Endothelial cell of umbilical vein (primary cell): ENCODE measurements at regions of chr1 and their contacts with region 1.

Region 1: GRCh38 chr1:201361652-201362504 is 15.6 kb downstream of the TNNT2 start:
- DNase-seq: peak; percentile 26
- H3K4me3 ChIP-seq: no peak overlapping the region
- H3K27ac ChIP-seq: no peak overlapping the region
- H3K4me1 ChIP-seq: peaks cover 6% of the 10 kb centered on the region
- H3K27me3 ChIP-seq: peaks cover 0 to 3% of the 10 kb centered on the region in 2 experiments
- CTCF ChIP-seq: peak; percentile 72 to 84
- POLR2A ChIP-seq: no peak

Region 2: GRCh38 chr1:201170533-201171062 is 191.3 kb before region 1 on chr1:
- CTCF ChIA-PET with region 1: no interaction called
- POLR2A ChIA-PET with region 1: no interaction called
- dilution Hi-C with region 1: no loop called
- intact Hi-C with region 1: no loop called
- DNase-seq: peak; percentile 82
- H3K4me3 ChIP-seq: peak overlapping the region; percentile 51 to 57 (median 55)
- H3K27ac ChIP-seq: no peak overlapping the region
- H3K4me1 ChIP-seq: peaks cover 9% of the 10 kb centered on the region
- H3K27me3 ChIP-seq: peaks cover 9 to 11% of the 10 kb centered on the region in 2 experiments
- CTCF ChIP-seq: no peak
- POLR2A ChIP-seq: no peak

Region 3: DNA sequence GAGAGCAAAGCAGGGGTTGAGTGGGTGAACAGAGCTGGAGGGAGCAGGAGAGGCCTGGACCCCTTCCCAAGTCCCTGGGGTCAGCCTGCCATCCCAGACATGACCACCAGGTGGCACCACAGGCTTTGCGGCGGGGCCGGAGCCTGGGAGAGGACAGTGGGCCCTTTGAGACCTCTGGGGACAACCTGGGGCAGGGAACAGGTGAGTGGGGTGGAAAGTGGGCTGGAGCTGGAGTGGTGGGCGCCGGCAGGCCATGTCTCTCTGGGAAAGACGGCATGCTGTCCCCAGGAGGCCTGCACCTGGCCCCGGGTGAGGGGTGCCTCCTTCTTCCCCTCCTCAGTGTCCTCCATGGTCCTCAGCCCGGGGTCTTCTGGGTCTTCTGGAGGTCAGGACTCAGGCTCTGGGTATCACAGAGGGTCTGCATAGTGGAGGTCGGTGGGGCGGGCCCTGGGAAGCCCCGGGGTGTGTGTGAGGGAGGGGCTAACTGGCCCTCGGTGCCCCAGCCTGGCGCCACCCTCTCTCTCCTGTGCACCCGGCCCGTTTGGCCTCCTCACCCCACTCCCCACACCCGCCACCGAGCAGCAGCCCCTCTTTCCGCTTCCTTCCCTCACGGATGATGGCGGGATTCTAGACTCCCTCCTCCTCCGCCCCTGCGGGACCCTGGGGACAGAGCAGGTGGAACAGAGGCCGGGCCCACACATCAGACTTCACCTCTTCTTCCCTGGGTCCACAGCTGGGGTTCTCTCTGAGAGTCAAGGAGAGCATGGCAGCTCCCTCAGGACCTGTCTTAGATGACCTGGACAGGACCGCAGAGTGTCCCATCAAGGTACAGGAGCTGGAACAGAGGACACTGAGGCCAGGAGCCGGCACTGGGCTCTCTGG is 107.0 kb before region 1 on chr1:
- CTCF ChIA-PET with region 1: interaction called, 109 read pairs
- POLR2A ChIA-PET with region 1: no interaction called
- dilution Hi-C with region 1: no loop called
- intact Hi-C with region 1: no loop called
- DNase-seq: peak; percentile 33
- H3K4me3 ChIP-seq: no peak overlapping the region
- H3K27ac ChIP-seq: no peak overlapping the region
- H3K4me1 ChIP-seq: no peaks in the 10 kb centered on the region
- H3K27me3 ChIP-seq: peaks cover 3 to 5% of the 10 kb centered on the region in 2 experiments
- CTCF ChIP-seq: peak; percentile 90 to 97
- POLR2A ChIP-seq: no peak

Region 4: DNA sequence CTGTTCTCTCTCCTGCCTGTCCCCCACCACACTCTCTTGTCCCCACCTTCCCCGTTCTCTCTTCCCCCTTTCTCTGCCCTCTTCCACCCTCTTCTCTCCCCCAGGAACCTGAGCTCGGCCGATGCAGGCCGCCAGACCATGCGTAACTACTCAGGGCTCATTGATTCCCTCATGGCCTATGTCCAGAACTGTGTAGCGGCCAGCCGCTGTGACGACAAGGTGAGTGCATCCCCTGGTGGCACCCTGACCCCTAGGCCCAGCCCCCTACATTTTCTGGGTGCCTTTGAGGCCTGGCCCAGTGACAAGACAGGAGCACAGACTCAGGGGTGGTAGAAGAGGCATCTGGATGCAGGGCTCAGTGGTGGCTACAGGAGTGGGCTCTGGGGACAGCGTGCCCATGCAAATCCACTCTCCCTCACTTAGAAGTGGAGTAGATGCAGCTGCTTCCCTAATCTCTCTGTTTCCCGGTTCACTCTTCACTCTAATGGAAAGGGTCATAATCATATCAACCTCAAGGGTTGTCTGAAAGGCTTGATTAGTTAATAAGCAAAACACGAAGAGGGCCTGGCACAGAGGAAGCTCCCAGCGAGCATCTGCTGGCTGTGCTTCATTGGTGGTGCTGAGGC is 41.6 kb before region 1 on chr1:
- CTCF ChIA-PET with region 1: no interaction called
- POLR2A ChIA-PET with region 1: no interaction called
- dilution Hi-C with region 1: no loop called
- intact Hi-C with region 1: no loop called
- DNase-seq: no peak
- H3K4me3 ChIP-seq: no peak overlapping the region
- H3K27ac ChIP-seq: no peak overlapping the region
- H3K4me1 ChIP-seq: no peaks in the 10 kb centered on the region
- H3K27me3 ChIP-seq: no peaks in the 10 kb centered on the region
- CTCF ChIP-seq: no peak
- POLR2A ChIP-seq: no peak

Region 5: GRCh38 chr1:201376464-201377374 is 14.8 kb after region 1 on chr1:
- CTCF ChIA-PET with region 1: interaction called, 13 read pairs
- POLR2A ChIA-PET with region 1: no interaction called
- dilution Hi-C with region 1: no loop called
- intact Hi-C with region 1: no loop called
- DNase-seq: peak; percentile 40
- H3K4me3 ChIP-seq: no peak overlapping the region
- H3K27ac ChIP-seq: no peak overlapping the region
- H3K4me1 ChIP-seq: no peaks in the 10 kb centered on the region
- H3K27me3 ChIP-seq: peaks cover 9 to 11% of the 10 kb centered on the region in 2 experiments
- CTCF ChIP-seq: peak; percentile 64 to 67
- POLR2A ChIP-seq: no peak

Region 6: GRCh38 chr1:201506556-201507359 is 144.9 kb after region 1 on chr1 and contains the start of gene CSRP1:
- CTCF ChIA-PET with region 1: no interaction called
- POLR2A ChIA-PET with region 1: no interaction called
- dilution Hi-C with region 1: no loop called
- intact Hi-C with region 1: no loop called
- DNase-seq: peak; percentile 74
- H3K4me3 ChIP-seq: peak within 1 kb of the TSS; percentile 47 to 84 (median 72)
- H3K27ac ChIP-seq: peak within 1 kb of the TSS; percentile 89
- H3K4me1 ChIP-seq: peaks cover 49% of the 10 kb centered on the region
- H3K27me3 ChIP-seq: no peaks in the 10 kb centered on the region
- CTCF ChIP-seq: no peak
- POLR2A ChIP-seq: peak; percentile 96
- total RNA-seq, gene CSRP1: 332 and 393 TPM in 2 replicates